Caco-2 (cell line): ENCODE measurements at regions of chr18 and their contacts with region 1.

Region 1: GRCh38 chr18:7497081-7497480 is 70.0 kb upstream of the PTPRM start:
- DNase-seq: no peak
- H3K4me3 ChIP-seq: no peak overlapping the region
- H3K4me3 Mint-ChIP-seq: no peak overlapping the region
- H3K27ac Mint-ChIP-seq: no peak overlapping the region
- H3K4me1 ChIP-seq: peaks cover 2% of the 10 kb centered on the region; the same call in 1 of the 2 replicates
- H3K4me1 Mint-ChIP-seq: no peaks in the 10 kb centered on the region
- H3K27me3 ChIP-seq: no peaks in the 10 kb centered on the region
- H3K27me3 Mint-ChIP-seq: peaks cover 3% of the 10 kb centered on the region
- CTCF ChIP-seq: no peak

Region 2: DNA sequence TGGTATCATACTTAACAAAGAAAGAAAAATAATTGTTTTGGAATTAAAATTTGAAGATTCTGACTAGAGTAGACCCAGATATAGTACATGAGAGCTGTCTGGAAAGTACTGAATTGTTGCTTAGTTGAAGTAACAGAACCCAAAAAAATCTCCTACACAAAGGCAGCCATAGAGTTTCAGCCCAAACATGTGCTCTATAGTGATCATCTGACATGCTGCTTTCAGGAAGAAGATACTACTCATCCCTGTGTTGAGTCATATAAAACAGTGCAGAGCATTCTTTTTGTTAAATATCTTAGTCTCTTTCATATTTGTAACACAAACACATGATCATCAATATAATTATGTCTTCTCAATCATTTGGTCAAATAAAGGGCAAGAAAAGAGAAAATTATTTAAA is 14.7 kb before region 1 on chr18:
- CTCF ChIA-PET with region 1: no interaction called
- POLR2A ChIA-PET with region 1: interaction called, 10 read pairs
- intact Hi-C with region 1: no loop called
- DNase-seq: no peak
- H3K4me3 ChIP-seq: no peak overlapping the region
- H3K4me3 Mint-ChIP-seq: no peak overlapping the region
- H3K27ac Mint-ChIP-seq: no peak overlapping the region
- H3K4me1 ChIP-seq: peaks cover 2% of the 10 kb centered on the region
- H3K4me1 Mint-ChIP-seq: peaks cover 3% of the 10 kb centered on the region
- H3K27me3 ChIP-seq: no peaks in the 10 kb centered on the region
- H3K27me3 Mint-ChIP-seq: no peaks in the 10 kb centered on the region
- CTCF ChIP-seq: no peak